PC-3 (cell line): ENCODE measurements at regions of chr10 and their contacts with region 1.

Region 1: DNA sequence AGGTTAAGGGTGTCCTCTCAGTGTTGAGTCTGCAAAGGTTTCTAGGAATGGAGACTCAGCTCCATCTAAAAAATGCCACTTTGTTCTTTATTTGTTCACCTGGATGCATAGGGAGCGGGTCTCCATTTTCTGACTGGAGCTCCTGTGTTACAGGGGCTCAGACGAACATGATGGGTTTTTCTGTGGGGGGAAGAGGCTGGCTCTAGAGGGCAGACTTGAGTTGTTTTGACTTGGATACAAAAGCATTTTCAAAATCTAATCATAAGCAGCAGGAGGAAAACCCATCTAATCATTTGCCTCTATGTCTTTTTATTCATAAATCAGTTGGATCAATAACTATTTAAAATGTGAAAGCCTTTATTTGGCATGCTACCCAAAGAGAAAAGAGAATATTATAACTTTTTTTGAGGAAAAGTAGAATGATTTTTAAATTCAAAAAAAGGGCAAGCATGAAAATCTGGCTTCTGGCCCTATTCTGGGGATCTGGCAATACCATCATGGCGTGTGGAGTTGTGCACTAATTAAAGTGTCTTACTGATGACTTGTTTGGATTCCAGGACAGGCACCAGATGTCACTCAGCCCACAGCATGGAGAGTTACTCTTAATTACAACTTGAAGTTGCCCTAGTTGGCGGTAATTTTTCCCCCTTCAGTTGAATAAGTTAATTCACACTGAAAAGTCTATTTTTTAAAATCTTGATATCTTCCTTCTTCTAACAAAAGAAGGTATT is 594.9 kb downstream of the REEP3 start:
- DNase-seq: peak; percentile 54
- ATAC-seq: peak; percentile 29; the same call in 1 of the 2 replicates
- H3K4me3 ChIP-seq: no peak overlapping the region; the same call in 1 of the 2 replicates
- H3K27ac ChIP-seq: peak overlapping the region; percentile 71
- H3K4me1 ChIP-seq: peaks cover 40% of the 10 kb centered on the region
- H3K27me3 ChIP-seq: no peaks in the 10 kb centered on the region
- CTCF ChIP-seq: peak; percentile 84

Region 2: DNA sequence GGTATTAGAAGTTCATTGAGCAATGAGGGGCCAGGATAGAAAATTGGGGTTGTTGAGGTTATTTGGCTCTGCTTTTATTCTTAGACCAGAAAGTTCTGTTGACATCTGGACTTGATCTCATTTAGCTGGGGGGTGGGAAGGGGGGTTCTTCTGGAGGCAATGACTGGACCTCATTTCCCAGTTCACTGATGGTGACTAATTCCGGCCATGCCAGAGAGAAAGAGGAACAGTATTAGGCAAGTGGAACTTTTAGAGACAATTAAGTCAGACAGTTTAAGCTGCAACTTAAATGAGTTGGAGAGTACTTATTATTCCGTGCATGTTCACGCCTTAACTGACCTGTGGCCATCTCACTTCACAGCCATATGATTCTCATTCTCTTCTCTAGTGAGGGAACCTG is 82.4 kb before region 1 on chr10:
- CTCF ChIA-PET with region 1: no interaction called
- POLR2A ChIA-PET with region 1: no interaction called
- intact Hi-C with region 1: loop called (anchors 2 kb)
- DNase-seq: peak; percentile 35
- ATAC-seq: peak; percentile 12; the same call in 1 of the 2 replicates
- H3K4me3 ChIP-seq: no peak overlapping the region
- H3K27ac ChIP-seq: no peak overlapping the region
- H3K4me1 ChIP-seq: peaks cover 6% of the 10 kb centered on the region
- H3K27me3 ChIP-seq: no peaks in the 10 kb centered on the region
- CTCF ChIP-seq: no peak

Region 3: GRCh38 chr10:64288404-64288803 is 172.3 kb after region 1 on chr10:
- CTCF ChIA-PET with region 1: no interaction called
- POLR2A ChIA-PET with region 1: no interaction called
- intact Hi-C with region 1: loop called (anchors 1 kb)
- DNase-seq: no peak
- ATAC-seq: no peak
- H3K4me3 ChIP-seq: no peak overlapping the region
- H3K27ac ChIP-seq: no peak overlapping the region
- H3K4me1 ChIP-seq: no peaks in the 10 kb centered on the region
- H3K27me3 ChIP-seq: no peaks in the 10 kb centered on the region
- CTCF ChIP-seq: no peak

Region 4: GRCh38 chr10:64379898-64380297 is 263.8 kb after region 1 on chr10:
- CTCF ChIA-PET with region 1: no interaction called
- POLR2A ChIA-PET with region 1: no interaction called
- intact Hi-C with region 1: loop called (anchors 2 kb)
- DNase-seq: peak; percentile 75
- ATAC-seq: peak; percentile 90
- H3K4me3 ChIP-seq: no peak overlapping the region
- H3K27ac ChIP-seq: no peak overlapping the region
- H3K4me1 ChIP-seq: no peaks in the 10 kb centered on the region
- H3K27me3 ChIP-seq: no peaks in the 10 kb centered on the region
- CTCF ChIP-seq: peak; percentile 81